PC-9 (cell line): ENCODE measurements at regions of chr5 and their contacts with region 1.

Region 1: GRCh38 chr5:74035521-74035981 is 409.6 kb downstream of the ARHGEF28 start:
- DNase-seq: peak; percentile 69 to 83
- H3K4me3 ChIP-seq: no peak overlapping the region
- H3K27ac ChIP-seq: peak overlapping the region; percentile 58
- H3K4me1 ChIP-seq: peaks cover 18% of the 10 kb centered on the region
- H3K27me3 ChIP-seq: no peaks in the 10 kb centered on the region
- CTCF ChIP-seq: peak; percentile 65

Region 2: DNA sequence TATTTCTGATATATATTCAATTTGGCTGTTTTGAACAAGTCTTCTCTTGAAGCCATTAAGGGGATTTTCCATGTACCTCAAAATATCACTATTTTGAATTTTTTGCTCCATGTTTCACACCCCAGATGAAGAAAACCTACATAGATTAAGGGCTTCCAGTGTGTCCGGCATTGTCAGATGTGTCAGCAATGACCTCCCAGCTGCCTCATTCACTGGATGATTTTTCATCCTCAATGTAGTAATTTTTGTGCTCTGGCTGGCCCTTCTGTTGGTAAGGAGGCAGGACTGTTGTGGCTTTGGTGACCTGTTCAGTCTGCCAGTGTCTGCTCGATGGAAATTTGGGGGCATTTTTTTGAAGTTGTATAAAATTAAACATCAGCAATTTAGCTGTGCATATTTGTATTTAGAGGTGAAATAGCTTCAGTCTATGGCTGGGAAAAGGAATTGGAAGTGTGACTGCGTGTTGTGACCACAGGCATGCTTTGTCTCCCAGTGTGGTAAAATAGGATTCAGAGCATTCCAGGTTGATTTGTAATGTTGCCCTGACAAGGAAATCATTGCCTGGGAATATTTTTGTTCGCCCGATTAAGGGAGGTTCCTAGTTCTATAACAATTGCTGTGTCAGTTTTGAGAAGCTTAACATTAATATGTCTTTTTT is 97.1 kb before region 1 on chr5:
- CTCF ChIA-PET with region 1: no interaction called
- POLR2A ChIA-PET with region 1: no interaction called
- intact Hi-C with region 1: loop called (anchors 2 kb)
- DNase-seq: peak; percentile 77 to 98
- H3K4me3 ChIP-seq: peak overlapping the region; percentile 28; the same call in 1 of the 2 replicates
- H3K27ac ChIP-seq: peak overlapping the region; percentile 98
- H3K4me1 ChIP-seq: peaks cover 33% of the 10 kb centered on the region
- H3K27me3 ChIP-seq: no peaks in the 10 kb centered on the region
- CTCF ChIP-seq: no peak

Region 3: GRCh38 chr5:74127381-74128320 is 92.1 kb after region 1 on chr5:
- CTCF ChIA-PET with region 1: no interaction called
- POLR2A ChIA-PET with region 1: no interaction called
- intact Hi-C with region 1: loop called (anchors 2 kb)
- DNase-seq: peak in 1 of 2 experiments; percentile 25
- H3K4me3 ChIP-seq: no peak overlapping the region
- H3K27ac ChIP-seq: no peak overlapping the region
- H3K4me1 ChIP-seq: 0 out of 2 replicates have a peak, but pooled peaks cover 13% of the 10 kb centered on the region
- H3K27me3 ChIP-seq: no peaks in the 10 kb centered on the region
- CTCF ChIP-seq: peak; percentile 32; the same call in 1 of the 2 replicates

Region 4: GRCh38 chr5:74240786-74241750 is 205.5 kb after region 1 on chr5:
- CTCF ChIA-PET with region 1: no interaction called
- POLR2A ChIA-PET with region 1: no interaction called
- intact Hi-C with region 1: loop called (anchors 1 kb)
- DNase-seq: peak; percentile 50 to 96
- H3K4me3 ChIP-seq: peak overlapping the region; percentile 38; the same call in 1 of the 2 replicates
- H3K27ac ChIP-seq: peak overlapping the region; percentile 100
- H3K4me1 ChIP-seq: peaks cover 60% of the 10 kb centered on the region
- H3K27me3 ChIP-seq: no peaks in the 10 kb centered on the region
- CTCF ChIP-seq: 0 out of 2 replicates have a peak, but pooled peaks have one; percentile 11

Region 5: GRCh38 chr5:74543156-74543995 is 507.8 kb after region 1 on chr5:
- CTCF ChIA-PET with region 1: no interaction called
- POLR2A ChIA-PET with region 1: no interaction called
- intact Hi-C with region 1: loop called (anchors 1 kb)
- DNase-seq: peak; percentile 86 to 97
- H3K4me3 ChIP-seq: peak overlapping the region; percentile 31; the same call in 1 of the 2 replicates
- H3K27ac ChIP-seq: peak overlapping the region; percentile 95
- H3K4me1 ChIP-seq: peaks cover 73% of the 10 kb centered on the region
- H3K27me3 ChIP-seq: no peaks in the 10 kb centered on the region
- CTCF ChIP-seq: no peak